Thyroid gland (tissue), 4 donors: ENCODE measurements at regions of chr2 and their contacts with region 1.

Region 1: DNA sequence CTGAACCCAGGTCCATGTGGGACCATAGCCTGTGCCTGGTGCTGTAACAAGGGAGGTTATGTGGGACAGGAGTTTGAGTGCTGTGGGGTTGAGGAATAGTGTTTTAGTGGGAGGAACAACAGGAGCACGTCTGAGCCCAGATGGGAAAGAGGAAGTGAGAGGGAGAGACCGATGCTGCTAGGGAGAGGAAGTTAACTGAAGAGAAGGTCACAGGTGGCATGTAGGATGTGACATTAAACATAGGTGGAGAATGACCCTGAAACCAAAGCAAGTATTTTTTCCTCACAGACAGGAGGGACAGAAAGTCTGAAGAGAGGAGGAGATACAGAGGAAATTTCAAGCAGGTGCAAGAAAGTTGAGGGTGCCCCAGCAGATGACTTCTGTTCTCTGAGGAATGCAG is 87.8 kb downstream of the ACOXL start:
- DNase-seq: no peak
- H3K4me3 ChIP-seq: no peak overlapping the region
- H3K27ac ChIP-seq: no peak overlapping the region
- H3K4me1 ChIP-seq: no peaks in the 10 kb centered on the region
- H3K27me3 ChIP-seq: no peaks in the 10 kb centered on the region
- CTCF ChIP-seq: no peak
- POLR2A ChIP-seq: no peak

Region 2: GRCh38 chr2:111091811-111092211 is 271.7 kb after region 1 on chr2:
- intact Hi-C with region 1: loop called (anchors 10 kb)
- DNase-seq: no peak
- H3K4me3 ChIP-seq: no peak overlapping the region
- H3K27ac ChIP-seq: no peak overlapping the region
- H3K4me1 ChIP-seq: no peaks in the 10 kb centered on the region
- H3K27me3 ChIP-seq: no peaks in the 10 kb centered on the region
- CTCF ChIP-seq: no peak
- POLR2A ChIP-seq: no peak